Caco-2 (cell line): ENCODE measurements at regions of chr20 and their contacts with region 1.

Region 1: DNA sequence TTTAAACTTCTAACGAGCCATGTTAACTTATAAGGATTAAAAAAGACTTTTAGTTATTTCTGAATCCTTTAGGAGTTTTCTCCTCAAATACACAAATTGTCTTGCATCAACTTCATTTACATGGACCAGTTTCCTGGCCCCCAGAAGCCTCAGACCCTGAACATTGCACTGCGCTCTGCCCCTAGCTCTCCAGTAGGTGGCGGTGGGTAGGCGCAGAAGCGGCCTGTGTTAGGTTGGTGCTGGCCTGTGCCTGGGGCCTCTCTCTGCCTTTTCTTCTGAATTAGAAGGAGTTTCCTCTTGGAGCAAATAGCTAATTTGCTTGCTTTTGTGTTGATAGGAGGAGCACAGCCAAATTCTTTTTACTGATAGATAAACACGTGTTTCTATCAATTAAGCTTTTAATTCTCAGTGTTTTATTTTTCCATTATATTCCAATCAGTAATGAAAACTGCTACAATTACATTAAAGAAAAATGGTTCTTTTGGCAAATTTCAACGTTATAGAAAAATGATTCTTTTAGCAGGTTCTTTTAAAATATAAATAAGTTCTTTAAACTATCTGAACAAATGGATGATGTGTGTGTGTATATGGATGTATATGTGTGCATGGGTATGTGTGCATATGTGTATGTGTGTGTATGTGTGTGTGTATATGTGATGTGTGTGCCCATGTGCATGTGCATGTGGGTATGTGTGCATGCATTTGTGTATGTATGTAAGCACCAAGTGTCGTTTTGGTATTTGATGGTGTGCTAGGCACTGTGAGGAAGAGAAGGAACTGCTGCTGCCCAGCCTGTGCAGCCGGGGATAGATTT is 44.5 kb downstream of the DTD1 start:
- DNase-seq: peak; percentile 83 to 86
- H3K4me3 ChIP-seq: no peak overlapping the region
- H3K4me3 Mint-ChIP-seq: no peak overlapping the region
- H3K27ac Mint-ChIP-seq: no peak overlapping the region
- H3K4me1 ChIP-seq: peaks cover 51% of the 10 kb centered on the region
- H3K4me1 Mint-ChIP-seq: peaks cover 43% of the 10 kb centered on the region
- H3K27me3 ChIP-seq: no peaks in the 10 kb centered on the region
- H3K27me3 Mint-ChIP-seq: no peaks in the 10 kb centered on the region
- CTCF ChIP-seq: peak; percentile 94 to 99

Region 2: GRCh38 chr20:18587665-18588573 is 44.5 kb before region 1 on chr20 and contains the start of gene DTD1:
- CTCF ChIA-PET with region 1: interaction called, 7 read pairs
- POLR2A ChIA-PET with region 1: interaction called, 11 read pairs
- intact Hi-C with region 1: no loop called
- DNase-seq: peak; percentile 94 to 97
- H3K4me3 ChIP-seq: peak within 1 kb of the TSS; percentile 51
- H3K4me3 Mint-ChIP-seq: peak within 1 kb of the TSS; percentile 74
- H3K27ac Mint-ChIP-seq: peak within 1 kb of the TSS; percentile 58
- H3K4me1 ChIP-seq: peaks cover 17% of the 10 kb centered on the region
- H3K4me1 Mint-ChIP-seq: peaks cover 14% of the 10 kb centered on the region
- H3K27me3 ChIP-seq: no peaks in the 10 kb centered on the region
- H3K27me3 Mint-ChIP-seq: no peaks in the 10 kb centered on the region
- CTCF ChIP-seq: peak; percentile 61 to 79
- total RNA-seq, gene DTD1: 90.0 and 109 TPM in 2 replicates

Region 3: DNA sequence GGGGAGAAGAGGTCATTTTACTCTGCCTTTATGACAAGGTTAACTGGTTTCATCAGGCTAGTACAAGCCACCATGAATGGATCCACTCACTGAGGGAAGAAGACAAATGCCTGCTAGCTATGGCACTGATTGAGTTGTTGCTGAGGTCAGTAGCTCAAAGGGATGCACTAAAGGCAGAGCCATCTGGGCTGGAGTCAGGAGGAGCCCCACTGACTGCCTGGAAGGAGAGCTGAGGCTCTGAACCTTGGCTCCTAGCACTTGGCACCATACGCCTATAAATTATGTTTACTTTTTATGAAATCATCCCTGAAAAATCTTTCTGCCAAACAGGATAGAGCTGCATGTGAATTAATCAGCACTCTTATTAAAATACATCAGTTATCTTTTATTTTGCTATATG is 60.0 kb after region 1 on chr20:
- CTCF ChIA-PET with region 1: no interaction called
- POLR2A ChIA-PET with region 1: no interaction called
- intact Hi-C with region 1: loop called (anchors 10 kb)
- DNase-seq: no peak
- H3K4me3 ChIP-seq: no peak overlapping the region
- H3K4me3 Mint-ChIP-seq: no peak overlapping the region
- H3K27ac Mint-ChIP-seq: no peak overlapping the region
- H3K4me1 ChIP-seq: no peaks in the 10 kb centered on the region
- H3K4me1 Mint-ChIP-seq: peaks cover 6% of the 10 kb centered on the region
- H3K27me3 ChIP-seq: no peaks in the 10 kb centered on the region
- H3K27me3 Mint-ChIP-seq: no peaks in the 10 kb centered on the region
- CTCF ChIP-seq: no peak

Region 4: GRCh38 chr20:18750735-18751134 is 118.3 kb after region 1 on chr20:
- CTCF ChIA-PET with region 1: no interaction called
- POLR2A ChIA-PET with region 1: no interaction called
- intact Hi-C with region 1: no loop called
- DNase-seq: no peak
- H3K4me3 ChIP-seq: no peak overlapping the region
- H3K4me3 Mint-ChIP-seq: no peak overlapping the region
- H3K27ac Mint-ChIP-seq: no peak overlapping the region
- H3K4me1 ChIP-seq: no peaks in the 10 kb centered on the region
- H3K4me1 Mint-ChIP-seq: no peaks in the 10 kb centered on the region
- H3K27me3 ChIP-seq: no peaks in the 10 kb centered on the region
- H3K27me3 Mint-ChIP-seq: no peaks in the 10 kb centered on the region
- CTCF ChIP-seq: no peak

Region 5: DNA sequence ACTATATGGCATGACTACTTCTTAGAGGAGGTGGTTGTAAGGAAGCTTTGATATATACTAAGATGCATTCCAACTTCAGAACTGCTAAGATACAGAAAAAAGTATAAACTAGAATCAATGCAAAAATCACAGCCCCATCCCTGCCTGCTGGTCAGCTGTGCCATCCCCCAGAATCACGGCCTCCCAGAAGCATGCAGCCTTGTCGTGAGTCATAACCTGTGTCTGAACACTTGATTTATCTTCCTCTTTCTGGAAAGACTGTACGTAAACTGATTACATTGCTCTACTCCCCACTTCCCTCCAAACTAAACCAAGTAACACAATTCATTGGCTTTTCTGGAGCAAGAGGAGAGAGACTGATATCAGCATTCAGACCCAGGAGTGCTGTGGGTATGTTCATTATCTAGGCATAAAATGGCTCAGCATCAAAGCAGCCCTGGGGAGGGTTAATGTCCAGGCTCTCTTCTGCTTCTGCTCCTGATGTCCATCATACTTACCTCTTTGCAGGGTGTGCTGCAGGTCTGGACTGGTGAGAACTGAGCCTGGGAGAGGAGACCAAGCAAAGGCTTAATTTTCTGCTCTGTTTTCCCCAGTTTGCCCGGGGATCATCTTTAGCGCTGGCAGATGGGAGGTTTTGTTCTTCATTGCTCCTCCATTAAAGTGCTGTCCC is 199.6 kb after region 1 on chr20:
- CTCF ChIA-PET with region 1: no interaction called
- POLR2A ChIA-PET with region 1: no interaction called
- intact Hi-C with region 1: loop called (anchors 10 kb)
- DNase-seq: no peak
- H3K4me3 ChIP-seq: no peak overlapping the region
- H3K4me3 Mint-ChIP-seq: no peak overlapping the region
- H3K27ac Mint-ChIP-seq: no peak overlapping the region
- H3K4me1 ChIP-seq: no peaks in the 10 kb centered on the region
- H3K4me1 Mint-ChIP-seq: no peaks in the 10 kb centered on the region
- H3K27me3 ChIP-seq: no peaks in the 10 kb centered on the region
- H3K27me3 Mint-ChIP-seq: peaks cover 3% of the 10 kb centered on the region
- CTCF ChIP-seq: no peak

Region 6: DNA sequence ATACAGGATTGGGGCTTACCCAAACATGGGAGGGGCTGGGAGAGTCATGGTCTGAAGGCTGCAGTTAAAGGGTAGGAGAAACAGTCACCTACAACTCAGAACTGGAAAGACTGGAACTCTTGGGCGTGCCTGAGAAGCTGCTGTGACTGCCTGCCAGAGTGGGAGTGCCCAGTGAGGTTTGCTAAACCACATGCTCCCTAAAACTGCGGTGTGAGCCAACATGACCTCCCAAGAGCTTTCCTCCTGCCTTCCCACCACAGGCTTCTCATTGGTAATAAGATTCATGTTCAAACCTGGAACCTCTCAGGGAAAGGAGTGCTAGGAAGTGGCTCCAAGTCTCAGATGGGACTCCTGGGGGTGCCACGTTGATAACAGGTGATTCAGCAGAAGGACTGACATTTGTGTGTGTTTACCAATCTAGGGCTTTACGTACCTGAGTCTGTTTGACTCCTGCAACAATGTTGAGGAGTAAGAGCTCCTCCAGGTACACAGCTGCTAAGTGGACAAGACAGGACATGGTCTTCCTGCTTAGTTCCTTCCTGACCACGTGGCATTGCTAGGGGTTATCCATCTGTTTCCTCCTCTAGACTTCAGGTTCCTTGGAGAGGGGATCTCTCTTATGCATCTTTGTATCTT is 415.4 kb after region 1 on chr20:
- CTCF ChIA-PET with region 1: interaction called, 4 read pairs
- POLR2A ChIA-PET with region 1: no interaction called
- intact Hi-C with region 1: loop called (anchors 5 kb)
- DNase-seq: no peak
- H3K4me3 ChIP-seq: no peak overlapping the region
- H3K4me3 Mint-ChIP-seq: no peak overlapping the region
- H3K27ac Mint-ChIP-seq: no peak overlapping the region
- H3K4me1 ChIP-seq: no peaks in the 10 kb centered on the region
- H3K4me1 Mint-ChIP-seq: no peaks in the 10 kb centered on the region
- H3K27me3 ChIP-seq: no peaks in the 10 kb centered on the region
- H3K27me3 Mint-ChIP-seq: peaks cover 11% of the 10 kb centered on the region
- CTCF ChIP-seq: no peak